H1 (cell line): ENCODE measurements at regions of chr1 and their contacts with region 1.

Region 1: DNA sequence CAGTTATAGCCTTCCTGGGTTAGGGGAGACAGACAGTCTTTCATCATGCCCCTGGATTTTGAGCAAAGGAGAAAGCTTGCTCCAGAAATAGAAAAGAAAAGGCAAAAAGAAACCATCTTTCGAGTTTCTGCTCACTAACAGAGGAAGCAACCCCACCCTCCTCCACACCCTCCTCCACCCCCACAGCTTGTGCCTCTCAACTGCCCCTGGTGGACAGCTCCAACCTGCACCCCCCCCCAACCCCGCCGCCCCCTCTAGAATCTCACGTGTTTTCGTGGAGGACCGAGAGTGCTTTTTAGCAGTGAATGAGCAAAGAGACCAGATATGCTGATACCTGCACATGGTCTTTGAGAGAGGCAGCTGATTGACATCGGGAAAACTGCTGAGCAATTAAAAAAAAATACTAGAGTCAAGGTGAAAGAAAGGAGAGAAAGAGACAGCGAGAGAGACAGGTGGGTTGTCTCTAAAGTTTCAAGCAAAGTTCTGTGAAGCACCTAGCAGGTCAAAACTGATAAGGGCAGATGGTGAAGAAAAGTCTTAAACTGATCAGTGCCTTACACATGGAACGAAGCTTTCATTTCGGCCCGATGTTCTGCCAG is 358.3 kb downstream of the KIF26B start:
- DNase-seq: no peak
- H3K4me3 ChIP-seq: no peak overlapping the region
- H3K27ac ChIP-seq: no peak overlapping the region
- H3K4me1 ChIP-seq: peaks cover 2 to 12% (median 10%) of the 10 kb centered on the region in 4 experiments; a peak in 4 of 7 replicates
- H3K27me3 ChIP-seq: no peaks in the 10 kb centered on the region; a peak in 1 of 7 replicates
- CTCF ChIP-seq: peak in 2 of 3 experiments; percentile 13 to 49; a peak in 3 of 4 replicates
- EP300 ChIP-seq: no peak
- POLR2A ChIP-seq: no peak
- RAD21 ChIP-seq: peak; percentile 22 to 28; a peak in 2 of 4 replicates

Region 2: GRCh38 chr1:245493029-245493428 is 20.1 kb before region 1 on chr1:
- CTCF ChIA-PET with region 1: interaction called, 11 read pairs
- POLR2A ChIA-PET with region 1: no interaction called
- DNase-seq: no peak
- H3K4me3 ChIP-seq: no peak overlapping the region
- H3K27ac ChIP-seq: no peak overlapping the region
- H3K4me1 ChIP-seq: peaks cover 0 to 3% (median 0%) of the 10 kb centered on the region in 4 experiments; a peak in 1 of 7 replicates
- H3K27me3 ChIP-seq: no peaks in the 10 kb centered on the region
- CTCF ChIP-seq: peak in 1 of 3 experiments; percentile 42; a peak in 1 of 4 replicates
- EP300 ChIP-seq: no peak
- POLR2A ChIP-seq: no peak
- RAD21 ChIP-seq: peak; percentile 8 to 27; a peak in 1 of 4 replicates

Region 3: GRCh38 chr1:245526141-245526540 is 13.1 kb after region 1 on chr1:
- CTCF ChIA-PET with region 1: interaction called, 11 read pairs
- POLR2A ChIA-PET with region 1: interaction called, 3 read pairs
- DNase-seq: no peak
- H3K4me3 ChIP-seq: no peak overlapping the region
- H3K27ac ChIP-seq: no peak overlapping the region
- H3K4me1 ChIP-seq: no peaks in the 10 kb centered on the region
- H3K27me3 ChIP-seq: no peaks in the 10 kb centered on the region
- CTCF ChIP-seq: no peak
- EP300 ChIP-seq: no peak
- POLR2A ChIP-seq: no peak
- RAD21 ChIP-seq: no peak

Region 4: GRCh38 chr1:245765230-245766000 is 252.3 kb after region 1 on chr1:
- CTCF ChIA-PET with region 1: no interaction called
- POLR2A ChIA-PET with region 1: no interaction called
- DNase-seq: no peak
- H3K4me3 ChIP-seq: no peak overlapping the region
- H3K27ac ChIP-seq: no peak overlapping the region
- H3K4me1 ChIP-seq: peaks cover 0 to 5% (median 3%) of the 10 kb centered on the region in 4 experiments
- H3K27me3 ChIP-seq: no peaks in the 10 kb centered on the region
- CTCF ChIP-seq: no peak
- EP300 ChIP-seq: no peak
- POLR2A ChIP-seq: no peak
- RAD21 ChIP-seq: no peak